Endothelial cell of umbilical vein (primary cell): ENCODE measurements at regions of chr7 and their contacts with region 1.

Region 1: DNA sequence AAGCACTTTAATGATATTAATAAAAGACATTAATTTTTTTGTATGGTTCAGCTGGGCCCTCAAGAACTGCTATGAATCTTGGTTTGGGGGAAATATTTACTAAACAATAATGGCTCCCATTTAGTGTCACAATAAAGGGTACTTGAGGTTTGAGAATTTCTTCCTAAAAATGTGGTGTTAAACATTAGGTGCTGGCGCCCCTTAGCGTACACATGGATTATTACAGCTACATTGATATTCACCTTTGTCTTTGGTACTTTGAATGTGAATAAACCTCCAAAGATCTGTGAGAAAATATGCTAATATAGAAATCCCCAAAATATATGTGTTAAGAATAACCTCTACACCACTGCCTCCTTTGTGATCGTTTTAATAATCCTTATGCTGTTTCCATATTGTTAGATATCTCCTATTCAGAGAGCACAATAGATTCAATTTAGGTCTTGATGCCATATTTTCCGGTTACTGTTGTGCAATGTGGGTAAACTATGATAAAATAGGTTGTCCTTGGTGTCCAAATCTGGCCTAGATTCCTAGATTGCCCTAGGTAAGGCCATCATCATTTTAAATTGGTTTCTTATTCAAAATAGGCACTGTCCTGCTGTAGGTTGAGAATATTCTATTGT is 161.8 kb upstream of the CACNA2D1 start:
- DNase-seq: peak; percentile 62
- H3K4me3 ChIP-seq: no peak overlapping the region
- H3K27ac ChIP-seq: no peak overlapping the region
- H3K4me1 ChIP-seq: no peaks in the 10 kb centered on the region
- H3K27me3 ChIP-seq: no peaks in the 10 kb centered on the region
- CTCF ChIP-seq: peak; percentile 44 to 57
- POLR2A ChIP-seq: no peak

Region 2: DNA sequence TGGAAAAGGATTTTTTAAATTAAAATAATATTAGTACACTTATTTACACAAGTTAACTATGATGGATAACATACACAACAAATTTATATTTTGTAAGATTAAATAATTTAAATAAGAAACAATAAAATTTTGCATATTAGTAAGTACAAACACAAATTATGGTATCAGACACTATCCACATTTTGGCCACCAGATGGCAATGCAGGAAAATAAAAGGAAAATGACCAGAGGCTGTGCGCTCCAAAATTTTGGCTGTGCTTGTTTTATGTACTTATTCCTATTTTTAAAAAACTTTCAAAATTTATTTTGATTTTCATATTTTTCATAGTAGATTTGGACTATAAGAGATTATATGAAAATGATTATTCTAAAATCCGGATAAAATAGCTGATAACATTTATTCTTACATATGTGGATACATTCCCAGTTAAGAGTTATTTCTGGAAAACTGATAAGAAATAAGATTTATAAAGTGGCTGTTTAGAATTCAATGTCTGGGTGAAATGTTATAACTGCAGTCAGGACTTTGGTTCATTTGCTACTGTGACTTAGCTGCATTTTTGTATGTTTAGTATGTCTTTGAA is 560.8 kb before region 1 on chr7:
- CTCF ChIA-PET with region 1: interaction called, 81 read pairs
- POLR2A ChIA-PET with region 1: no interaction called
- dilution Hi-C with region 1: no loop called
- intact Hi-C with region 1: loop called (anchors 1 kb)
- DNase-seq: peak; percentile 67
- H3K4me3 ChIP-seq: no peak overlapping the region
- H3K27ac ChIP-seq: no peak overlapping the region
- H3K4me1 ChIP-seq: peaks cover 27% of the 10 kb centered on the region
- H3K27me3 ChIP-seq: no peaks in the 10 kb centered on the region
- CTCF ChIP-seq: peak; percentile 36
- POLR2A ChIP-seq: no peak

Region 3: DNA sequence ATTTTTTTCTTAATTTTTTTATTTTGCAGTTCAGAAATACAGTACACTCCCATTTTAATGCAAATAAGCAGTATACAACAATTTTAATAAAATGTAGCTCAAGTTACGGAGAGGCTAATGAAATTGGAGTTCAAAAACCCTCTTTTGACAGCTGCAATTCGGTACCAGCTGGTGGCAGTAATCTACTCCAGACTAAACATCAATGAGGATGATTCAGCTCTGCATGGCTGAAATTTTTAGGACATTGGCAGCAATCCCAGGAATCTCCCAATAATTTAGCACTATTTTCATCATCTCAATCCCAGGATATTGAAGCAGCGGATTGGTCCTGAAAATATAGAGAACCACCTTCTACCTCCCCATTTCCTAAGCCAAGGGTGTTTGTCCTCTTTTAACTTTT is 440.5 kb before region 1 on chr7:
- CTCF ChIA-PET with region 1: interaction called, 3 read pairs
- POLR2A ChIA-PET with region 1: no interaction called
- dilution Hi-C with region 1: no loop called
- intact Hi-C with region 1: loop called (anchors 1 kb)
- DNase-seq: peak; percentile 28
- H3K4me3 ChIP-seq: no peak overlapping the region
- H3K27ac ChIP-seq: no peak overlapping the region
- H3K4me1 ChIP-seq: no peaks in the 10 kb centered on the region
- H3K27me3 ChIP-seq: no peaks in the 10 kb centered on the region
- CTCF ChIP-seq: peak; percentile 8 to 12
- POLR2A ChIP-seq: no peak

Region 4: DNA sequence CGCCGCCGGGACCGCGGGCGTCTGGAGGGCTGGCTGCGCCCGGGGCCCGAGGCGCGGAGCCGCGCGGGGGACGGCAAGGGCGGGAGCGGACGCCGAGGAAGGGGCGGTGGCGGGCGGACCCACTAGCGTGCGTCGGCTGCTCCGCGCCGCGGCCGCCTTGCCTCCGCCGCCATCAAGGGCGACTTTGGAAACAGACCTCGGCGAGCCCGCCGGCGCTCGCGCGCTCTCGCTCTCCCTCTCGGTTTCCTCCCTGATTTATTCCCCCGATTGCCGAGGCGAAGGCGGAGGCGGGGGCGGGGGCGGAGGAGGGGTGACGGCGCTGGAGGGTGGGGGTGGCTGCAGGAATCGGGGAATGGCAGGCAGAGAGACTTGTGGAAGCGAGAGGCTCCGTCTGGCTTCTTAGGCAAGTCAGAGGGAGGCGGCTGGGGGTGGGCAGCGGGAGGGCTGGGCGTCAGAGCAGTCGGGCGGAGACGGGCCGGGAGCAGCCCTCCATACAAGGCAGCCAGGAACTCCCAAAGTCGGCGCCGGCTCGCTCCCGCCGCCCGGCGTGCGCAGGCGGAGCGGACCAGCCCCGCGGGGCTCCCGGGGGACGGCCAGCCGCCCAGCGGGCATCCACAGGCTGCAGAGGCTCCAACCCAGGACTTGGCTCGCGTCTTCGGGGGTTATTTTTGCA is 161.7 kb before region 1 on chr7 and contains the start of gene CACNA2D1:
- CTCF ChIA-PET with region 1: interaction called, 3 read pairs
- POLR2A ChIA-PET with region 1: no interaction called
- dilution Hi-C with region 1: no loop called
- intact Hi-C with region 1: loop called (anchors 2 kb)
- DNase-seq: peak; percentile 88
- H3K4me3 ChIP-seq: peak within 1 kb of the TSS; percentile 59 to 91 (median 79)
- H3K27ac ChIP-seq: peak within 1 kb of the TSS; percentile 80
- H3K4me1 ChIP-seq: peaks cover 19% of the 10 kb centered on the region
- H3K27me3 ChIP-seq: no peaks in the 10 kb centered on the region
- CTCF ChIP-seq: peak in 1 of 2 donors; percentile 26
- POLR2A ChIP-seq: peak; percentile 88
- total RNA-seq, gene CACNA2D1: 38.6 and 42.1 TPM in 2 replicates

Region 5: DNA sequence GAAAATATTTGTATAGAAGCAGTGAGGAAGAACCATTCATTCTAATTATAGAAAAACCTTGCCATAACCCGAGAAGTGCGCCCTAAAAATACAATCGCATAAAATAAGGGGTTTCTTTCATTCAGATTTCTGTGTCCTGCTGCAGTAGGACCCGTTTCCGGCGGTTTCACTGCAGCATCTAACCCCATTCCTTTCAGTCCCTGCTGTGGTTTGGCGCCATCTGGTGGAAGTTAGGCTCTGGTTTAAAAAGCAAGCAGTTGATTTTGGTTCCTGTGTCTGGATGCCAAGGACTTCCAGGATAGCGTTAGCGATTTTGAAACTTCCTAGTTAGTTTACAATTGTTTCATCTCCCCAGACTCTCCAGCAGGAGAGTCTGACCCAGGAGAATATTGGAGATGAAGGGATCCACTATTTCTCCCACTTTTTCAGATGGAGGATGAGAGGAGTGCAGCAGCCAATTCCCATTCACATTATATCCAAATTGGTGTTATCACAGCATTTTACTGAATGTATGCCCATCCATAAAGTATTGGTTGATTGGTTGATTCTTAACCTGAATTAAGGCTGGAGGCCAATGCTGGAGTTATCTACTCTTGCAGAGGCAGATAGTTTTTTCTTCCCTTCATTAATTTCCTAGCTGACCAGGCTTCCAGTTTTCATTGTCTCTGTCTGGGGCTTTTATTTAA is 33.0 kb before region 1 on chr7:
- CTCF ChIA-PET with region 1: interaction called, 35 read pairs
- POLR2A ChIA-PET with region 1: no interaction called
- dilution Hi-C with region 1: no loop called
- intact Hi-C with region 1: loop called (anchors 1 kb)
- DNase-seq: peak; percentile 80
- H3K4me3 ChIP-seq: peak overlapping the region in 1 of 3 experiments; percentile 37
- H3K27ac ChIP-seq: no peak overlapping the region
- H3K4me1 ChIP-seq: peaks cover 4% of the 10 kb centered on the region
- H3K27me3 ChIP-seq: no peaks in the 10 kb centered on the region
- CTCF ChIP-seq: peak; percentile 76 to 87
- POLR2A ChIP-seq: no peak

Region 6: DNA sequence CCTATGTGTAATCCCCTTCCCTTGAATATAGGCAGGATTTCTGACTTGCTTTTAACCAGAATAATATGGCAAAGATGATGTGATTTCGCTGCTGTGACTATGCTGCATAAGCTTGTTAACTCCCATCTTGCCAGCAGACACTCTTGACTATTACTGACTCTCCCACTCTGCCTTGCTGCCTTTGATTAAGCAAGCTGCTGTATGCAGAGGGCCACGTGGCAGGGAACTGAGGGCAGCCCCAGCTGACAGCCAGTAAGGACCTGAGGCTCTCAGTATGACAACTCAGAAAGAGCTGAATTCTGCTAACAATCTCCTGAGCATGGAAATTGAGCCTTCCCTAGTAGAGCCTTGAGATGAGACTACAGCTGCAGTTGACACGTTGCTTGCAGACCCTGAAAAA is 117.6 kb after region 1 on chr7:
- CTCF ChIA-PET with region 1: interaction called, 10 read pairs
- POLR2A ChIA-PET with region 1: no interaction called
- dilution Hi-C with region 1: no loop called
- intact Hi-C with region 1: loop called (anchors 1 kb)
- DNase-seq: no peak
- H3K4me3 ChIP-seq: no peak overlapping the region
- H3K27ac ChIP-seq: no peak overlapping the region
- H3K4me1 ChIP-seq: no peaks in the 10 kb centered on the region
- H3K27me3 ChIP-seq: no peaks in the 10 kb centered on the region
- CTCF ChIP-seq: no peak
- POLR2A ChIP-seq: no peak